ENCODE measurements at regions of chr16 and their contacts with region 1.

Region 1: GRCh38 chr16:27268376-27269299 is at the start of gene NSMCE1:
- DNase-seq: peak; percentile 90 to 98
- H3K4me3 ChIP-seq: peak within 1 kb of the TSS; percentile 92
- H3K27ac ChIP-seq: peak within 1 kb of the TSS; percentile 78
- H3K4me1 ChIP-seq: peaks cover 43% of the 10 kb centered on the region
- H3K27me3 ChIP-seq: no peaks in the 10 kb centered on the region
- CTCF ChIP-seq: 0 out of 2 replicates have a peak, but pooled peaks have one; percentile 14
- total RNA-seq, gene NSMCE1: 114 and 121 TPM in 2 replicates

Region 2: DNA sequence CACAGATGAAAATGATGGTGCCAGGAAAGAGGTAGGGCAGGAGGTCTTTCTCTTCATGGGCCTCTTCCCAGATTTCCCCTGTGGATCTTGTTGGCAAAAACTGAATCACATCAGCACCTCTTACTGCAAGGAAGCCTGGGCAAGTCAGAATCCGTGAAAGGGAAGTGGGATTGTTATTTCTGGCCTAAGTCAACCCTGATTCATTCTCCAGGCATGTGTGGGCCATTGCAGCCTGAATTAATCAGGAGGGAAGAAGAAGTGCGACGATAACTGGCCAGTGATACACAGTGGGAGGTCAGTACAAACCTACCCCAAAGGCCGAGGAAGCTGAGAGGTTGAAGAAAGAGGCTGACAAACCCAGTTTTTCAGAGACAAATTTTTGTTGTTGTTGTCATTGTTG is 17.8 kb after region 1 on chr16:
- CTCF ChIA-PET with region 1: no interaction called
- POLR2A ChIA-PET with region 1: no interaction called
- intact Hi-C with region 1: loop called (anchors 1 kb)
- DNase-seq: peak; percentile 58 to 88
- H3K4me3 ChIP-seq: no peak overlapping the region
- H3K27ac ChIP-seq: peak overlapping the region; percentile 60
- H3K4me1 ChIP-seq: peaks cover 20% of the 10 kb centered on the region
- H3K27me3 ChIP-seq: no peaks in the 10 kb centered on the region
- CTCF ChIP-seq: no peak

Region 3: DNA sequence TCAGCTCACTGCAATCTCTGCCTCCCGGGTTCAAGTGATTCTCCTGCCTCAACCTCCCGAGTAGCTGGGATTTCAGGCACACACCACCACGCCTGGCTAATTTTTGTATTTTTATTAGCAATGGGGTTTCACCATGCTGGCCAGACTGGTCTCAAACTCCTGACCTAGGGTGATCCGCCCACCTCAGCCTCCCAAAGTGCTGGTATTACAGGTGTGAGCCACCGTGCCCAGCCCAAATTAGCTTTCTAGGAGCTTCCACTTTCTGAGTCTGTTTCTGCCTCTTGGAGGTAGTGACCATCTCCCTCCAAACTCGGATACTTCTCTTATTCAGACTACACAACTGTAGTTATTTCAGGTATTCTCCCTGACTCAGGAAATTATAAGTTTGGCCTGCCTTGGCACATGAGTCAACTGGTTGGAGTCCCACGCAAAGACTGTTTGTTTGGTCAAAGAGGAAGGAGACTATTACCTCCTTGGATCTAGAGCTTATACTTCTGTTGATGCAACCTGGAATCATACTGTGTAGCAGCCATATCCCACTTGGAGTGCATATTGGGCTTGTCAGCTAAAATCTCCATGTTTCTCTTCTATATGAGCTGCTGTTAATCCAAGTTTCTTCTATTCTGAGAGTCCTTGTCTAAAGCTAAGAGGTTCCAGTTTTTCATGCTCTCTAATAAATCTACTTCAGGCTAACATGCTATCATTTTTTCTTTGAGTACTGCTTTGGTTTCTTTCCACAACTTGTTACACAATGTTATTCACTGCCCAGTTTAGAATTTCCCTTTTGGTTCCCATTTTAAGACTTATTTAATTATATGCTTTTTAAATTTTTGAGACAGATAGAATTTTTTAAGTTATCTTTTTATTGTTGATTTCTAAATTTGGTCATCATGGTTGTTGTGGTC is 52.6 kb after region 1 on chr16:
- CTCF ChIA-PET with region 1: interaction called, 6 read pairs
- POLR2A ChIA-PET with region 1: interaction called, 10 read pairs
- intact Hi-C with region 1: loop called (anchors 1 kb)
- DNase-seq: peak in 1 of 2 experiments; percentile 82
- H3K4me3 ChIP-seq: no peak overlapping the region
- H3K27ac ChIP-seq: peak overlapping the region; percentile 98
- H3K4me1 ChIP-seq: peaks cover 92% of the 10 kb centered on the region
- H3K27me3 ChIP-seq: no peaks in the 10 kb centered on the region
- CTCF ChIP-seq: no peak

Region 4: GRCh38 chr16:27367461-27368357 is 99.1 kb after region 1 on chr16:
- CTCF ChIA-PET with region 1: no interaction called
- POLR2A ChIA-PET with region 1: no interaction called
- intact Hi-C with region 1: no loop called
- DNase-seq: peak; percentile 52 to 70
- H3K4me3 ChIP-seq: no peak overlapping the region
- H3K27ac ChIP-seq: no peak overlapping the region
- H3K4me1 ChIP-seq: peaks cover 36% of the 10 kb centered on the region
- H3K27me3 ChIP-seq: no peaks in the 10 kb centered on the region
- CTCF ChIP-seq: peak; percentile 84

Measured in PC-9 (cell line).